ENCODE measurements at regions of chr1 and their contacts with region 1.

Region 1: DNA sequence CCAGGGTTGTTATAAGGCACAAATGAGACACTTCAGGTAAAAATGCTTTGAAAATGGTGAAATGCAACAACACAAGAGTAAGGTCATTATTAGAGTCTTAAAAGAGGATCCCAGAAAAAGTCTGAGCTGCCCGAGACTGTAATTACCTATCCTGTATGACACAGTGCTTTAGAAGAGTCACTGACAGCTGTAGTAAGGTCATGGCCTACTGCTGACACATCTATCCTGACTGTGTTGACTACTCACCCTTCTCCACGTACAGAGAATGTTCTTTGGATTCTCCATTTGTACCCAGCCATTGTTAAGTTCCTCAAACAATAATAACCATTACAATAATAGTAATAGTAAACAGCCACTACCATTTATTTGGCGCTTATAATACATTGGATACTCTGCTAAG is 104.4 kb downstream of the CACHD1 start:
- DNase-seq: no peak
- H3K4me3 ChIP-seq: no peak overlapping the region
- CTCF ChIP-seq: no peak

Region 2: DNA sequence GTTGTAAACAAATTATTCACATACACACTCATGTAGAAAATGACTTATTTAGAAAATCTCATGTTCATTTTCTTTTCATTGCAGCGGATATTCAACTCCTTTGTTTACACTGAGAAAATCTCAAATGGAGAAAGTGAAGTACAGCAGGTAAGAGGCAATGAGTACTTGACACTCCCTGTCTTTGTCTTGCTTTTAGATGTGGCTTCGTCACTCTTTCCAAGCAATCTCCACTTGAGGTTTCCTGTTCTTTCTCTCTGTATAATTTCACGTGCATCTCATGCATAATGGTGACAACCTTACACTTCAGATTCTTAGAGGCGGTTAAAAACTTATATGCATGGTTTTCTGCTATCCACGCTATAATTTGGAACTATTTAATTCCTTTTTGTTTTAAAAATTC is 23.8 kb before region 1 on chr1:
- CTCF ChIA-PET with region 1: no interaction called
- POLR2A ChIA-PET with region 1: no interaction called
- DNase-seq: no peak
- H3K4me3 ChIP-seq: no peak overlapping the region
- CTCF ChIP-seq: no peak

Region 3: GRCh38 chr1:64584479-64584878 is 10.2 kb after region 1 on chr1:
- CTCF ChIA-PET with region 1: interaction called, 11 read pairs
- POLR2A ChIA-PET with region 1: no interaction called
- DNase-seq: no peak
- H3K4me3 ChIP-seq: no peak overlapping the region
- CTCF ChIP-seq: peak; percentile 26

Region 4: GRCh38 chr1:64598100-64598571 is 23.8 kb after region 1 on chr1:
- CTCF ChIA-PET with region 1: no interaction called
- POLR2A ChIA-PET with region 1: no interaction called
- DNase-seq: peak; percentile 54
- H3K4me3 ChIP-seq: peak overlapping the region; percentile 26
- CTCF ChIP-seq: no peak